Activated CD4-positive, alpha-beta memory T cell treated with anti-CD3 and anti-CD28 coated beads for 36 hours (primary cell): ENCODE measurements at regions of chr19 and their contacts with region 1.

Region 1: GRCh38 chr19:53467485-53468262 is at the start of gene ZNF813:
- DNase-seq: peak; percentile 98
- H3K4me3 Mint-ChIP-seq: peak within 1 kb of the TSS; percentile 88
- H3K27ac Mint-ChIP-seq: peak within 1 kb of the TSS; percentile 75
- H3K4me1 Mint-ChIP-seq: peaks cover 21% of the 10 kb centered on the region
- H3K27me3 Mint-ChIP-seq: peaks cover 11% of the 10 kb centered on the region
- total RNA-seq, gene ZNF813: 4.6 to 5.5 TPM

Region 2: DNA sequence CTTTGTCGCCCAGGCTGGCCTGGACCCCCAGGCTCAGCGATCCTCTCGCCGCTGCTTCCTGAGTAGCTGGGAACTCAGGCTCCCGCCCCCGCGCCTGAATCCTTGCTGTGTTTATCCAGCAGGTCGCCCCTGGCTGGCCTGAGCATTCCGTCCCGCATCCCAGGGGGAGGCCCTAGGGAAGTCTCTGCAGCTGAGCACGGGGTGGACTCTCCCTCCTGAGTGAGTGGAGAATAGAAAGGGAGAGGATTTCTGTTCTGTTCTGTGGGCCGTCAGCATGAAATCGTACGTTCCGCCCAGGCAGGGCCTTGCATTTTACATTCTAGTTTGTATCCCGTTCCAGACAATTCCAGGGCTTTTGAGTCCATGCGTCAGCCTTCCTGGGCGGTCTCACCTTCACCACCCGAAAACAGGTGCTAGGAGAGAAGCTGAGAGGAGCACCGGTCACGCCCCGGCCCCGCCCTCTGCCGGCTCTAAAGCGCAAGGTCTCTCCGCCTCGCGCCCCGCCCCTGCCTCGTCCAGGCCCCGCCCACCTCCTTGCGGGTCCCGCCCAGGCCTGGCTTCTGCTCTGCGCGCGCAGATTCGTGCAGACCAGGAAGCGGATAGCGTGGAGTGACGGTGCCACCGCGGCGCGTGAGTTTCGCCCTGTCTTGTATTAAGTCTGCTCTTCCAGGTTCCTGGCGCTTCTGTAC is 36.1 kb before region 1 on chr19 and contains the start of gene ZNF761:
- CTCF ChIA-PET with region 1: no interaction called
- POLR2A ChIA-PET with region 1: no interaction called
- intact Hi-C with region 1: loop called (anchors 2 kb)
- DNase-seq: peak; percentile 98
- H3K4me3 Mint-ChIP-seq: peak within 1 kb of the TSS; percentile 84
- H3K27ac Mint-ChIP-seq: peak within 1 kb of the TSS; percentile 88
- H3K4me1 Mint-ChIP-seq: peaks cover 22% of the 10 kb centered on the region
- H3K27me3 Mint-ChIP-seq: no peaks in the 10 kb centered on the region
- total RNA-seq, gene ZNF761: 10.6 to 11.3 TPM

Region 3: DNA sequence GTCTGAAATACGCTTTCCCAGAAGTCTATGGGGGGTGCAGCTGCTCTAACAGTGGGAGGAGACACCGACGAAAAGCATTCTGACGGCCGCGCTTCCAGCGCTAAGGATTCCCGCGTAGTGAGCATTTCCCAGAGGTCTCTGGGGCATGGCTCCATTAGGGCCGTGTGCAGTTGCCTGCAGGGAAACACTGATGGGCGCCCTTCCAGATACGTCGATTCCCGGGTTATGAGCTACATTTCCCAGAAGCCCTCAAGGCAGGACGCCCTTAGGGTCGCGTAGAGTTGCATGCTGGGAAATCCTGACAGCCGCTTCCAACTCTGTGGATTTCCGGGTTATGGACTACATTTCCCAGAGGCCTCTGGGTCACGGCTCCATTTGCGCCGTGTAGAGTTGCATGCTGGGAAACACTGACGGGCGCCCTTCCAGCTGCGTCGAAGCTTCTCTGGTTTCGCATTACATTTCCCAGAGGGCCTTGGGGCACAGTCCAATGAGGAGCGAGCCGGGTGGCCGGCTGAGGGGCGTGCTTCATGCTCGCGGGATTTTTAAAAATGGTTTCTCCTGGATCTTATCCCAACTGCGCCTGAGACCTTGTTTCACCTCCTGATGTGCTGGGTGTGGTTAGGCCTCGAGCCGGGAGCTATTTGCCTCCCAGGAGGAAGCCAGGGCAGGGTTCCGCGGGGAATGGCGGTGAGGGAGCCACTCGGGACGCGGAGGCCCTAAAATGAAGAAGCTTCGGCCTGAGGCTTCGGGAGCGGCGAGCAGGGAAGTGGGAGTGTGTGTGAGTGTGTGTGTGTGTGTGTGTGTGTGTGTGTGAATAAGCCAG is 53.1 kb after region 1 on chr19:
- CTCF ChIA-PET with region 1: no interaction called
- POLR2A ChIA-PET with region 1: no interaction called
- intact Hi-C with region 1: loop called (anchors 2 kb)
- DNase-seq: peak; percentile 93
- H3K4me3 Mint-ChIP-seq: peak overlapping the region; percentile 99
- H3K27ac Mint-ChIP-seq: peak overlapping the region; percentile 89
- H3K4me1 Mint-ChIP-seq: peaks cover 19% of the 10 kb centered on the region
- H3K27me3 Mint-ChIP-seq: no peaks in the 10 kb centered on the region